ENCODE measurements at regions of chr10 and their contacts with region 1.

Region 1: GRCh38 chr10:130141878-130142277 is 5.7 kb downstream of the GLRX3 start:
- H3K4me3 ChIP-seq: no peak overlapping the region
- H3K27ac ChIP-seq: no peak overlapping the region
- H3K4me1 ChIP-seq: peaks cover 21% of the 10 kb centered on the region; the same call in 1 of the 2 replicates
- CTCF ChIP-seq: no peak

Region 2: GRCh38 chr10:130127364-130128061 is 14.4 kb before region 1 on chr10:
- CTCF ChIA-PET with region 1: interaction called, 12 read pairs
- POLR2A ChIA-PET with region 1: no interaction called
- H3K4me3 ChIP-seq: no peak overlapping the region
- H3K27ac ChIP-seq: no peak overlapping the region
- H3K4me1 ChIP-seq: peaks cover 2% of the 10 kb centered on the region; the same call in 1 of the 2 replicates
- CTCF ChIP-seq: peak; percentile 68